Activated B cell treated with CpG ODN at 0.5 μM for 24 hours (primary cell): ENCODE measurements at regions of chr19 and their contacts with region 1.

Region 1: GRCh38 chr19:39996811-39997594 is at the start of gene ZNF546:
- DNase-seq: peak; percentile 86
- ATAC-seq: peak; percentile 93
- H3K4me3 Mint-ChIP-seq: peak within 1 kb of the TSS; percentile 96
- H3K27ac Mint-ChIP-seq: peak within 1 kb of the TSS; percentile 97
- H3K4me1 Mint-ChIP-seq: peaks cover 35% of the 10 kb centered on the region
- H3K27me3 Mint-ChIP-seq: no peaks in the 10 kb centered on the region
- CTCF ChIP-seq: no peak
- total RNA-seq, gene ZNF546: 5.8 and 11.6 TPM in 2 replicates

Region 2: GRCh38 chr19:39824143-39825092 is 172.6 kb before region 1 on chr19:
- CTCF ChIA-PET with region 1: no interaction called
- POLR2A ChIA-PET with region 1: no interaction called
- intact Hi-C with region 1: loop called (anchors 2 kb)
- DNase-seq: peak; percentile 67
- ATAC-seq: peak; percentile 98
- H3K4me3 Mint-ChIP-seq: no peak overlapping the region
- H3K27ac Mint-ChIP-seq: no peak overlapping the region
- H3K4me1 Mint-ChIP-seq: peaks cover 12% of the 10 kb centered on the region
- H3K27me3 Mint-ChIP-seq: no peaks in the 10 kb centered on the region
- CTCF ChIP-seq: no peak

Region 3: DNA sequence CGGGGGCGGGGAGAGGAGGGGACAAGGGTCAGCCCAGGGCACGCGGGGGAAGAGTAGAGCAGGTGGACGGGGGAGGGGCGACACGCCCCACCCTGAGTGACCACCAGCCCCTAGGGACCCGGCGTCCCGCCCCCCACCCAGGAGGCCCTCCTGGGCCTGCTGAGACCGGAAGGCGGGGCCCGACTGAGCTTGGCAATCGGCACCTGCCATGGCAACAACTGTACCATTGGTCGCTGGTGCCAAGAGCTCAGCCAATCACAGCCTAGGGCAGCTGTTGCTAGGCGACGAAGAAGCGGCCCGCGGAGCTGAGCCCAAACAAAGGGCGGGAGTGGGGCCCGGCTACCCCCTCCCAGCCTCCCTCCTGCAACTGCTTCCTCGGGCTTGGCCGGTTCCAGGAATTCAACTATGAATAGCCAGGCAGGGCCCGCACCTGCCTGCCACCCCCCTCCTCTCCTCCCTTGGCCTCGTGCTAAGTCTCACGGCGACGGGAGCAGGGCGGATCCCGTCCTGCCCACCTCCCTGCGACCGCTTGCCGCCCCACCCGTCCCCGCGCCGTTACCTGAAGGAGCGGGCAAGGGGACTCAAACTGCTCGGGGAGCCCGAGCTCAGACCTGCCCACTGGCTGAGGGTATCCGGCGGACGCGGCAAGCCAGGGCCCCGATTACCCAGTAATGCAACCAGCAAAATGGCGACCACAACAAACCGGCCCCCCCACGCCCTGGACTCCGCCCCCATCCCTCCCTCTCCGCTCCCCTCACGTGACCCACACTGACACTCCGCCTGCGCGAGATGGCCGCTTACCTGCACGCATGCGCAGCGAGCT is 163.3 kb before region 1 on chr19 and contains the start of gene DYRK1B:
- CTCF ChIA-PET with region 1: no interaction called
- POLR2A ChIA-PET with region 1: interaction called, 6 read pairs
- intact Hi-C with region 1: loop called (anchors 2 kb)
- DNase-seq: peak; percentile 90
- ATAC-seq: peak; percentile 86
- H3K4me3 Mint-ChIP-seq: peak within 1 kb of the TSS; percentile 82
- H3K27ac Mint-ChIP-seq: peak within 1 kb of the TSS; percentile 87
- H3K4me1 Mint-ChIP-seq: peaks cover 33% of the 10 kb centered on the region
- H3K27me3 Mint-ChIP-seq: no peaks in the 10 kb centered on the region
- CTCF ChIP-seq: no peak
- total RNA-seq, gene DYRK1B: 16.9 and 17.2 TPM in 2 replicates

Region 4: GRCh38 chr19:39941615-39942365 is 55.2 kb before region 1 on chr19:
- CTCF ChIA-PET with region 1: no interaction called
- POLR2A ChIA-PET with region 1: interaction called, 14 read pairs
- intact Hi-C with region 1: no loop called
- DNase-seq: peak; percentile 29
- ATAC-seq: peak; percentile 82
- H3K4me3 Mint-ChIP-seq: peak overlapping the region; percentile 77
- H3K27ac Mint-ChIP-seq: peak overlapping the region; percentile 88
- H3K4me1 Mint-ChIP-seq: peaks cover 77% of the 10 kb centered on the region
- H3K27me3 Mint-ChIP-seq: no peaks in the 10 kb centered on the region
- CTCF ChIP-seq: no peak

Region 5: DNA sequence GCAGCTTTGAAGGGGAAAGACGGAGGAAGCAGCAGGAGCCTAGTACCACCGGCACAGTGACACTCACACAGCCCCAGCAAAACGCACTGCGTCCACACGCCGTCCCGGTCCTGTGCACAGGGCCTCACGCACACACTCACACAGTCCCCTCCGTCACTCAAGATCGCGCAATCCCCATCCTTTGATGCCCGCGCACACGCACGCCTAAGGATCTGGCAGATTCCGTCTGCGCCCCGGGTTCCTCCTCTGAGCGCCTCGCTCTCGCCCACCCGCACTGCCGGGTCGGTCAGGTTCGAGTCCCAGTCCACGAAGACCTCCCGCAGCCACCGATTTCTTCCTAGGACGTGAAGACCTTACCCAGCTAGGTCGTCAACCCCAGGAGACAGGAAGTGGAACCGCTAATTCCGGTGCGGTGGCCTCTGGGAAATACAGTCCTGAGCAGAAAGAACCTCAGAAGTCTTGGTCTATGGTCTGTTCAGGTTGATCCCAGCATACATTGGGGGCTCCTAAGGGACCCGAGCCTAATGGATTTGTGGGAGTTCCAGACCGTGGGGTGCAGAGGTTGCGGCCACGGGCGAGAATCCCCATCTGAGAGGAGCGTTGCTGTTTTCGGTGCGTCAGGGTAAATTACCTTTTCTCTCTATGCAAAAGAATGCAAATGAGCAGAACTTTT is 59.0 kb after region 1 on chr19 and contains the start of gene ZNF780B:
- CTCF ChIA-PET with region 1: no interaction called
- POLR2A ChIA-PET with region 1: interaction called, 22 read pairs
- intact Hi-C with region 1: loop called (anchors 1 kb)
- DNase-seq: peak; percentile 67
- ATAC-seq: peak; percentile 90
- H3K4me3 Mint-ChIP-seq: peak within 1 kb of the TSS; percentile 100
- H3K27ac Mint-ChIP-seq: peak within 1 kb of the TSS; percentile 98
- H3K4me1 Mint-ChIP-seq: peaks cover 48% of the 10 kb centered on the region
- H3K27me3 Mint-ChIP-seq: peaks cover 6% of the 10 kb centered on the region
- CTCF ChIP-seq: no peak
- total RNA-seq, gene ZNF780B: 36.4 and 51.1 TPM in 2 replicates

Region 6: GRCh38 chr19:40090241-40091204 is 93.5 kb after region 1 on chr19 and contains the start of gene ZNF780A:
- CTCF ChIA-PET with region 1: no interaction called
- POLR2A ChIA-PET with region 1: interaction called, 9 read pairs
- intact Hi-C with region 1: loop called (anchors 1 kb)
- DNase-seq: peak; percentile 71
- ATAC-seq: peak; percentile 84
- H3K4me3 Mint-ChIP-seq: peak within 1 kb of the TSS; percentile 100
- H3K27ac Mint-ChIP-seq: peak within 1 kb of the TSS; percentile 100
- H3K4me1 Mint-ChIP-seq: peaks cover 35% of the 10 kb centered on the region
- H3K27me3 Mint-ChIP-seq: peaks cover 12% of the 10 kb centered on the region
- CTCF ChIP-seq: no peak
- total RNA-seq, gene ZNF780A: 23.8 and 25.5 TPM in 2 replicates